Colonic mucosa (tissue), 4 donors: ENCODE measurements at regions of chr15 and their contacts with region 1.

Region 1: DNA sequence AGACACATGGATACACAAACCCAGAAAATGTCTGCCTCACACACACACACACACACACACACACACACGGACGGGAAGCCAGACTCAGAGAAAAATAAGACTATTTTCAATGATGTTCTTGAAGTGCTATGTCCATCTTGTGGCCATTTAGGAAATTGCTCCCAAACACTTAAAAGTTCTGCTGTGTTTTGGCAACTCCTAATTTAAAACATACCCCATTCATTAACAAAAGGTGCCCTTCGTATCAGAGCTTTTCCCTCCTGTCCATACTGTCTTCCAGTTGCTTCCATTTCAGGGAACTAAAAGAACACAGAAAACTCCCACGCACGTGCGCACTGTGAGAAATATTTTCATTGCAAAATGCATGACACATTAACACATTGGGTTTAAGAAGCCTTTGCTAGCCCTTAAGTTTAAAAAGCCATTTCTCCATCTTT is 44.6 kb downstream of the SLC12A1 start:
- DNase-seq: peak; percentile 20
- H3K4me3 ChIP-seq: no peak overlapping the region
- H3K27ac ChIP-seq: no peak overlapping the region
- H3K4me1 ChIP-seq: no peaks in the 10 kb centered on the region
- H3K27me3 ChIP-seq: no peaks in the 10 kb centered on the region
- CTCF ChIP-seq: peak; percentile 38

Region 2: GRCh38 chr15:47206358-47206978 is 1044.2 kb before region 1 on chr15:
- intact Hi-C with region 1: loop called (anchors 10 kb)
- DNase-seq: no peak
- H3K4me3 ChIP-seq: no peak overlapping the region
- H3K27ac ChIP-seq: no peak overlapping the region
- H3K4me1 ChIP-seq: no peaks in the 10 kb centered on the region
- H3K27me3 ChIP-seq: no peaks in the 10 kb centered on the region
- CTCF ChIP-seq: no peak

Region 3: DNA sequence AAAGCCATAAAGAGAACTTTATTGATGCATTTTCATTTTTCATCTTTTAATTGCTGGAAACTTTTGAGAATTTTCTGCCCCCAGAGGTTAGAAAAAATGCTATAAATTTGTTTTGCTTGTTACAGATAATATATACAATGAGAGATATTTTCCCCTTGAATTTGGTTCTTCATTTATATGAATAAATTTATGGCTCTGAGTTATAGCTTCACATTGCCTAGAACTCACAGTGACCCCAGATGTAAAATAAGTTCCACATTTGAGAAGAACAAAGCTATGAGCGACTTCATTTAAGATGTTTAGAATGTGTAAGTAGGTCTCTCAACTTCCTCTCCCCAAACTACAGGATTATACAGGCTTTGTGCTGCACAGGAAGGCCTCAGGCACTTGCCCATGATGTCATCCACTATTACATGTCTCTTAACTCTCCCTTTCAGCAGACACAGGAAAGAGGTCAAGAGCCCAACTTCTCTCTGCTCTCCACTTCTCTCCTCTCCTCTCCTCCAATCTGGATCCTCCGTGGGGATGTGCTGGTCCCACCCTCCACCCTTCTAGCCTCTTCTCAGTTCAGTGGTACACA is 173.3 kb after region 1 on chr15:
- intact Hi-C with region 1: no loop called
- DNase-seq: no peak
- H3K4me3 ChIP-seq: no peak overlapping the region
- H3K27ac ChIP-seq: no peak overlapping the region
- H3K4me1 ChIP-seq: no peaks in the 10 kb centered on the region
- H3K27me3 ChIP-seq: no peaks in the 10 kb centered on the region
- CTCF ChIP-seq: no peak